ENCODE measurements at regions of chr2 and their contacts with region 1.

Region 1: DNA sequence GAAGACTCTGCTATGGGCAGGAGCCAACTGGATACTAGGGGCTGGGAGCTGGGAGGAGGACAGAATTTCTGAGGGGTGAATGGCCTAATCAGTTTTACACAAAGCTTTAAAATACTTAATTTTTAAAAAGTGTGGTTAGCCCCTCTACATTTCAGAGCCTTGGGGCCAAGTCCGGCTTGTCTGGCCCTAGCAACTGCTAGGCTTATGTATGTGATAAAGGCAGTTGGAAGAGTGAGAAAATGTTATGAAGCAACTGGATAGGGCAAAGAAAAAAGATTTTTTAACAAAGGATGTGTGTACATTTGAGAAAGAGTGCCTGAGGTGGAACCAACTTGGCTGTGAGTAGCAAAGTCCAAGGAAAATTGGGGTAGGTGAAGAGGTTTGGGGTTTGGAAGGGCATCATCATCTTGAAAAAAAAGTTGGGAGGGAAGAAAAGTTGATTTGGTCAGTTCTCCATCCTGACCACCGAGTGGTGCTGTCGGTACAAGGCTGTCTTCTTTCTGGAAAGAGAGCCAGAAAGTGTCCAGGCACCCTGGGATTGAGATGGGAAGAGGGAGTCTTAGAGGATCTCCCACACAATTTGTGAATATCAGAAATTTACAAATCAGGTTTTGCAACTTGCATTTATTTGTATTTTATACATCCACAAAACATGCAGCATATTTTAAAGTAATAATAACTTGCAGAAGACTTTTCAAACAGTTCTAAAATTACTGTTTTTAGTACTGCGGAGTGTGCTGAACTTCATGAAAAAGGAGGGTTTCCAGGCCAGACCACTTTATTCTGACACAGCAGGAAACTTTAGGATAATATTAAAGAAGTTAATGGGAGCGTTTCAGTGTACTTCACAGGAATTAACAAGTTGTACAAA is 10.5 kb upstream of the CDK15 start:
- DNase-seq: peak; percentile 70
- ATAC-seq: peak; percentile 20; the same call in 1 of the 2 replicates
- H3K4me3 ChIP-seq: no peak overlapping the region
- H3K27ac ChIP-seq: peak overlapping the region; percentile 96
- H3K4me1 ChIP-seq: peaks cover 28% of the 10 kb centered on the region
- H3K27me3 ChIP-seq: no peaks in the 10 kb centered on the region
- CTCF ChIP-seq: peak; percentile 85

Region 2: GRCh38 chr2:201780674-201781581 is 14.9 kb before region 1 on chr2 and contains the start of gene ALS2:
- CTCF ChIA-PET with region 1: no interaction called
- POLR2A ChIA-PET with region 1: interaction called, 4 read pairs
- intact Hi-C with region 1: loop called (anchors 1 kb)
- DNase-seq: peak; percentile 97
- ATAC-seq: peak; percentile 87
- H3K4me3 ChIP-seq: peak within 1 kb of the TSS; percentile 97
- H3K27ac ChIP-seq: peak within 1 kb of the TSS; percentile 59
- H3K4me1 ChIP-seq: peaks cover 44% of the 10 kb centered on the region
- H3K27me3 ChIP-seq: no peaks in the 10 kb centered on the region
- CTCF ChIP-seq: no peak
- total RNA-seq, gene ALS2: 20.4 and 23.8 TPM in 2 replicates

Region 3: DNA sequence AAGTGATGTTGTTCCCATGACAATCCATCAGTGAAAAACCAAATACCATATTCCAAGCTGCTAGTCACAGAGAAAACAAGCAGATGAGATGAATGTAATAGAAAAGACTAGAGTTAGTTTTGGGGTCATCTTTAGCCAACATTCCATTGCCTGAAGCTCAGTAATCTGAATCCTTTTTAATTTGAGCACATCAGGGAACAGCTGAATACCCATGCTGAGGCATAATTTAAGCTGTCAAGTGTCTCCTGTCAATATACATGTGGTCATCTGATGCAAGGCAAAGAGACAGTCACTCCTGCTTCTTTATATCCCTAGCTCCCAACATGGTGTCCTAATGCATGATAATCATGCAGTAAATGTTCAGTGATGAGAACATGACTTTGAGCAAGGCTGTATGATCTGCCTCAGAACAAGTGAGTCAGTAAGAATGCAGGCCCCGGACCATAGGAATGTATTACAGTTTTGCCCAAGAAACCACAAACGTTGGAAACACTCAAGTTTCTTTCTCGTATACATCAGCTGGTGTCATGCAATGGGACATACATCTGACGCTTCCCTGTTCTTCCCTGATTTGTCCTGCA is 58.5 kb after region 1 on chr2:
- CTCF ChIA-PET with region 1: no interaction called
- POLR2A ChIA-PET with region 1: no interaction called
- intact Hi-C with region 1: loop called (anchors 1 kb)
- DNase-seq: peak; percentile 92
- ATAC-seq: peak; percentile 92
- H3K4me3 ChIP-seq: peak overlapping the region; percentile 31; the same call in 1 of the 2 replicates
- H3K27ac ChIP-seq: peak overlapping the region; percentile 80
- H3K4me1 ChIP-seq: peaks cover 33% of the 10 kb centered on the region
- H3K27me3 ChIP-seq: no peaks in the 10 kb centered on the region
- CTCF ChIP-seq: no peak

Region 4: DNA sequence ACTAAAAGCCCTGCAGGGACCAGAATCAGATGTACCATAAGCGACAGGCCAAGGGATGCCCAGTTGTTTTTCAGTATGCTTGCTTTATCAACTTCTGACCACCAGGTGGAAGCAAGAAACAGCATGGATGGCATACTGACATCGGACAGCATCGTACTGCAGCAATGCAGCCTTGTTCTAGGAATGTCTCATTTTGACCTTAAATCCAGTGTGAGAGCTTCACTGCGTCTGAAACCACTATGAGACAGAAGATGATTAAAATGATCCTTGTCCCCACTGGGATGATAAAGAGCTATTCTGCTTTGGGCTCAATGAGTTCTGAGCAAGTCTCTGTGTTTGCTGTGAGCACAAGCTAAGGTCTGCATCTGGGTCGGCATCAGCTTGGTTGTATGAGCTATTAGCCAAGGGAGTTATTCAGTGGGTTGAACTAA is 64.8 kb after region 1 on chr2:
- CTCF ChIA-PET with region 1: no interaction called
- POLR2A ChIA-PET with region 1: no interaction called
- intact Hi-C with region 1: loop called (anchors 1 kb)
- DNase-seq: peak; percentile 82
- ATAC-seq: peak; percentile 98
- H3K4me3 ChIP-seq: no peak overlapping the region
- H3K27ac ChIP-seq: no peak overlapping the region
- H3K4me1 ChIP-seq: no peaks in the 10 kb centered on the region
- H3K27me3 ChIP-seq: no peaks in the 10 kb centered on the region
- CTCF ChIP-seq: peak; percentile 88

Region 5: DNA sequence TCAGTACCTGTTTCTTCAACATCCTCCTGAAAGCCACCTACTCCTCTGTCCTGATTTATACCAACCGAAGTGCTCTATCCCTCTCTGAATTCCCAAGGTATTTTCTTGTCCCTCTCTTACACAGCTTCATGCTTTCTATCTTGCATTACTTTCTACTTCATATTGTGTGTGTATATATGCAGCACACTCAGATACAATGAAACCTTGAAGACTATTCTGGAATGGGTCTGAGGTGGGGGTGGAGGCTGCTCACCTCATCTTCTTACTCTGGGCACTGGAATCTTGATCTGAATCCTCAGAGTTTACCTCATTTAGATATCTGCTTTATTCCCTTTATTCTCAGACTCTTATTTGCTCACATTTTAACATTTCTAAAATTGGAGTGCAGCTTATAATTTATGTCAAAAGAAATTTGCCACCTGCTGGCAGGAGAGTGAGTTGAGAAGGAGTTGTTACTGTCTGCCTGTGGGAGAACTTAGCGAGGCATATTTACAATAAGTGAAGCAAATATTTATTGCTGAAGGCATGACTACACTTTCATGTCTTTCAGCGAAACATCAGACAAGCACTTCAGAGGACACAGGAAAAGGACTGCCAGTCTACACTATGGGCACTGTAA is 260.7 kb after region 1 on chr2:
- CTCF ChIA-PET with region 1: no interaction called
- POLR2A ChIA-PET with region 1: no interaction called
- intact Hi-C with region 1: loop called (anchors 1 kb)
- DNase-seq: peak; percentile 57
- ATAC-seq: peak; percentile 77
- H3K4me3 ChIP-seq: no peak overlapping the region
- H3K27ac ChIP-seq: no peak overlapping the region
- H3K4me1 ChIP-seq: no peaks in the 10 kb centered on the region
- H3K27me3 ChIP-seq: peaks cover 18% of the 10 kb centered on the region; the same call in 1 of the 2 replicates
- CTCF ChIP-seq: peak; percentile 80

Region 6: DNA sequence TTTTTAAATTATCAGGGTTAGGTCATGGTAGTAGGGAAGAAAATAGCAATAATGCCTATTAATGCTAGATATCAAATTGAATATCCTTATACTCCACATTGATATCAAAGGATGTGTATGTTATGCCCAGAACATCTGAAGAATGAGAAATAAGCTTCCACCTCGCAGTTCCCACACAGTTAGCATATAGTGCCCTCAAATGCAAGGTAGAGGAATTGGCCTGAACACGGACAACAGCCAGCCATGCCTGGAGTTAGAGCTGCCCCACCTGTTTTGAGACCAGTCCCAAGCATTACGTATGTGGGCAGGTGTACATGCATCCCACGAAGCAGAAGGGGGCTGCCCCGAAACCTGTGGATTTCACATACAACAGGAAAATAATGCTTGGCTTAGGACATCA is 363.0 kb after region 1 on chr2:
- CTCF ChIA-PET with region 1: no interaction called
- POLR2A ChIA-PET with region 1: no interaction called
- intact Hi-C with region 1: loop called (anchors 5 kb)
- DNase-seq: peak; percentile 48
- ATAC-seq: peak; percentile 66
- H3K4me3 ChIP-seq: no peak overlapping the region
- H3K27ac ChIP-seq: no peak overlapping the region
- H3K4me1 ChIP-seq: 0 out of 2 replicates have a peak, but pooled peaks cover 3% of the 10 kb centered on the region
- H3K27me3 ChIP-seq: no peaks in the 10 kb centered on the region
- CTCF ChIP-seq: peak; percentile 52

Measured in PC-3 (cell line).